HepG2 (cell line): ENCODE measurements at regions of chr10 and their contacts with region 1.

Region 1: DNA sequence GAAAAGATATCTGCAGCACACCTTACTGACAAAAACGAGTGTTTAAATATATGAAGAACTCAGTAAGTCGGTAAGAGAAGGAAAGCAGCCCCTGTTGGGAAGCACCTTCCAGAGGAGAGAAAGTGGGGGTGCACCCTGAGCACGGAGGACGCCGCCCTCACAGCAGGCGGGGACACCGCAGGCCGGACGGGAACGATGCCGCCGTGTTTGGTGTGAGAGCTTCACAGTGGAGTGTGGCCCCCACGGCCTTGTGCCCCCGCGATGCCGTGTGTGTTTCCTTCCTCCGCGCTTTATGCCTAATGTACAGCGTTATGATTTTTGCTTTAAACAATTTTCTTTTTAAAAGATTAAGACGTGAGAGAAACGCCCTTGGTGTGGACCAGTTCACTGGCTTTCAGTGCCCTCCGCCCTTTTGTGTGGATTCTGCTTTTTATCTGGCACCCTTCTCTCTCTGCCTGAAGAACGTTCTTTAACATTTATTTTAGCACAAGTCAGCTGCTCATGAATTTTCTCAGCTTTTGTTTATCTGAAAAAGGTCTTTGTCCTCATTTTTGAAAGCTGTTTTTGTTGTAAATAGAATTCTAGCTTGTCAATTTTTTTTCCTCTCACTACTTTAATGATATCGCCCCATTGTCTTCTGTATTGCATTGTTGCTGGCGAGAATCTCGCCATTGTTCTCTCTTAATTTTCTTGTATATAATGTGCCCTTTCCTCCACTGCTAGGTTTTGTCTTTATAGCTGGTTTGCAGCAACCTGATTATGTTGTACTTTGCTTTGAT is 110.7 kb downstream of the INPP5A start:
- DNase-seq: no peak
- ATAC-seq: no peak
- H3K4me3 ChIP-seq: no peak overlapping the region
- H3K27ac ChIP-seq: no peak overlapping the region
- H3K4me1 ChIP-seq: no peaks in the 10 kb centered on the region
- H3K27me3 ChIP-seq: no peaks in the 10 kb centered on the region
- CTCF ChIP-seq: no peak
- EP300 ChIP-seq: no peak
- POLR2A ChIP-seq: no peak
- RAD21 ChIP-seq: no peak

Region 2: GRCh38 chr10:132223156-132223590 is 425.1 kb before region 1 on chr10:
- CTCF ChIA-PET with region 1: no interaction called
- POLR2A ChIA-PET with region 1: no interaction called
- in situ Hi-C with region 1: no loop called
- intact Hi-C with region 1: no loop called
- DNase-seq: peak; percentile 75
- ATAC-seq: peak; percentile 98
- H3K4me3 ChIP-seq: no peak overlapping the region
- H3K27ac ChIP-seq: no peak overlapping the region
- H3K4me1 ChIP-seq: no peaks in the 10 kb centered on the region
- H3K27me3 ChIP-seq: no peaks in the 10 kb centered on the region
- CTCF ChIP-seq: peak; percentile 99
- EP300 ChIP-seq: no peak
- POLR2A ChIP-seq: no peak
- RAD21 ChIP-seq: peak; percentile 99

Region 3: DNA sequence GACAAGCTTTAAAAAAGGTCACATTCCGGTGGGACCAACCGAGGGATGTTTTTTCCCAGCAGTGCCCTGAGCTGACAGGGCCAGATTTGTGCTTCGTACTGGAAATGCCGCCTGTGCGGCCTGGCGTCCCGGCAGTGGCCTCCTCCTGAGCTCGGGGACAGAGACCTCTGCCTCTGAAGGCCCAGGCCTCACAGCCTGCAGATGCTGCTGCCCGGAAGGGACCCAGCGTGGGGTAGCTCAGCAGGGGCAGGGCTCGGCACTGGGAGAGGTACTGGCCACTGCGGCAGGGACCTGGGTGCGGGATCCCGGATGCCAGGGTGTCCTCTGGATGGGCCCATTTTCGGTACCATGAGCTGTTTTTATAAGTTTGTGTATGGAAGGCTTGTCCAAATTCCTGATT is 346.6 kb after region 1 on chr10:
- CTCF ChIA-PET with region 1: no interaction called
- POLR2A ChIA-PET with region 1: no interaction called
- in situ Hi-C with region 1: no loop called
- intact Hi-C with region 1: loop called (anchors 5 kb)
- DNase-seq: no peak
- ATAC-seq: no peak
- H3K4me3 ChIP-seq: no peak overlapping the region
- H3K27ac ChIP-seq: no peak overlapping the region
- H3K4me1 ChIP-seq: no peaks in the 10 kb centered on the region
- H3K27me3 ChIP-seq: peaks cover 11 to 74% of the 10 kb centered on the region in 2 experiments; a peak in 4 of 5 replicates
- CTCF ChIP-seq: no peak
- EP300 ChIP-seq: no peak
- POLR2A ChIP-seq: no peak
- RAD21 ChIP-seq: no peak